ENCODE measurements at regions of chr9 and their contacts with region 1.

Region 1: GRCh38 chr9:68584189-68585033 is 43.7 kb upstream of the TMEM252 start:
- DNase-seq: peak; percentile 82
- H3K4me3 ChIP-seq: no peak overlapping the region
- H3K27ac ChIP-seq: no peak overlapping the region
- H3K4me1 ChIP-seq: no peaks in the 10 kb centered on the region
- H3K27me3 ChIP-seq: no peaks in the 10 kb centered on the region
- CTCF ChIP-seq: peak; percentile 97 to 100
- POLR2A ChIP-seq: no peak

Region 2: DNA sequence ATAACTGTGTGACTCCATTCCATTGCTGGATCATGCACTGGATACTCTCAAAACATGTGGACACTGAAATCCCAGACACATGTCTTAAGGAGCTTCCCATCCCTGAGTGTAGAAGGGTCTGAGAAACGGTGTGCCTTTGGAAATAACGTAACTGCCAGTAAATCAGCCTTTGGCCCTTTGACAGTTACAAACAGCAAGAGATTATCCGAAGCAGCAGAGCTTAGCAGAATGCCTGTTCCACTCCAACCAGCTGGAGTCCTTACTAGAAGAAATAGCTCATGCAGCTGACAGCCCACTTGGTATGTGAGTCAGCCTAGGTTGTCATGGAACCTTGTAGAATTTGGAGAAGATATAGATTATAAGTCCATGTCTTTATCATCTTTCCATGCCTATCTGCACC is 50.7 kb before region 1 on chr9:
- CTCF ChIA-PET with region 1: no interaction called
- POLR2A ChIA-PET with region 1: no interaction called
- dilution Hi-C with region 1: no loop called
- intact Hi-C with region 1: no loop called
- DNase-seq: no peak
- H3K4me3 ChIP-seq: no peak overlapping the region
- H3K27ac ChIP-seq: no peak overlapping the region
- H3K4me1 ChIP-seq: no peaks in the 10 kb centered on the region
- H3K27me3 ChIP-seq: no peaks in the 10 kb centered on the region
- CTCF ChIP-seq: no peak
- POLR2A ChIP-seq: no peak

Region 3: GRCh38 chr9:68545033-68545705 is 39.2 kb before region 1 on chr9:
- CTCF ChIA-PET with region 1: no interaction called
- POLR2A ChIA-PET with region 1: no interaction called
- dilution Hi-C with region 1: no loop called
- intact Hi-C with region 1: no loop called
- DNase-seq: no peak
- H3K4me3 ChIP-seq: no peak overlapping the region
- H3K27ac ChIP-seq: no peak overlapping the region
- H3K4me1 ChIP-seq: no peaks in the 10 kb centered on the region
- H3K27me3 ChIP-seq: no peaks in the 10 kb centered on the region
- CTCF ChIP-seq: no peak
- POLR2A ChIP-seq: no peak

Region 4: DNA sequence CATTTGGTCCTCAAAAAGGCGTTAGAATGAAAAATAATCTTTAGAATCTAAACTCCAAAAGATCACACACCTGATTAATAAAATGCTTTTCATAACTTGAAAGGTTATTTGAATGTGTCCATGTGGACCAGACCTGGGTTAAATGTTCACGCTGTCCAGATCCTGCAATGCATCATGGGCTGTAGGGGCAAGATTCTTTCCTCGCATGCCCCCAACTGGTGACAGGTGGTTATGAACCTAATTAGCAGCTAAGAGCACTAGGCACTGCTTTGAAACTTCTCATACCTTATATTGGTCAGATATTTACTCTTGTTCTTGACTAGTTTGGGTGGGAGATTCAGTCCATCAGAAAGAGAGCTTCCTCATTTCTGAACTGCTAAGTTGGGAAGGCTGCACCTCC is 101.4 kb after region 1 on chr9:
- CTCF ChIA-PET with region 1: no interaction called
- POLR2A ChIA-PET with region 1: no interaction called
- dilution Hi-C with region 1: no loop called
- intact Hi-C with region 1: loop called (anchors 1 kb)
- DNase-seq: peak; percentile 39
- H3K4me3 ChIP-seq: no peak overlapping the region
- H3K27ac ChIP-seq: no peak overlapping the region
- H3K4me1 ChIP-seq: no peaks in the 10 kb centered on the region
- H3K27me3 ChIP-seq: peaks cover 2% of the 10 kb centered on the region in 2 experiments
- CTCF ChIP-seq: peak; percentile 36 to 48
- POLR2A ChIP-seq: no peak

Region 5: DNA sequence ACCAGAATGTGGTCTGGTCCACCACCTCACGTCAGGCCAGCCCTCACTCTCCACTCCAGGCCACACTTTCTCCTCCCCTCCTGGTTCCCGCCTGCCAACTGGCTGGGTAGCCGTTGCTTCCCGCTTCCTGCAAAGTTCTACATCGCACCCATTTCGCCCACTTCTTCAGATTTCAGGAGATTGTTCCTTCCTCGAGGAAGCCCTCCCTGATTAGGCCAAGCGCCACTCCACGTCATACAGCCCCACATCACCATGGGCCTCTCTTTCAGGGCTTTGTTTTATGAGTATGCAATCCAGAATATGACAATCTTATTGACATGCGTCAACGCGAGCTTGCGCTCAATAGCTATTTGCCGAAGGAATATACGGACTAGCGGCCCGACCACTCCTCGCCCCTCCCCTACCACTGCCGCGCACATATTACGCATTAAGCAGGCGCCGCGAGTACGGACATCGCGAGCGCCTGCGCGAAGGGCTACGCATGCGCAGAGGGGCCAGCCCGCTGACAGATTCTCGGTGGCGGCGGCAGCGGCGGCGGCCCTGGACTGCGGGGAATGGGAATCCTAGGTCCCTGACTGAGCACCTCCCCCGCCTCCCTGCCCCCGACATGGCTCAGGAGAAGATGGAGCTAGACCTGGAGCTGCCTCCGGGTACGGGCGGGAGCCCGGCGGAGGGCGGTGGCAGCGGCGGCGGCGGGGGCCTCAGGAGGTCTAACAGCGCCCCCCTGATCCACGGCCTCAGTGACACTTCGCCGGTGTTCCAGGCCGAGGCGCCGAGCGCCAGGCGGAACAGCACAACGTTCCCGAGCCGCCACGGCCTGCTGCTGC is 195.4 kb after region 1 on chr9:
- CTCF ChIA-PET with region 1: no interaction called
- POLR2A ChIA-PET with region 1: no interaction called
- dilution Hi-C with region 1: no loop called
- intact Hi-C with region 1: loop called (anchors 5 kb)
- DNase-seq: peak; percentile 96
- H3K4me3 ChIP-seq: peak overlapping the region; percentile 52 to 71 (median 62)
- H3K27ac ChIP-seq: peak overlapping the region; percentile 87
- H3K4me1 ChIP-seq: peaks cover 26% of the 10 kb centered on the region
- H3K27me3 ChIP-seq: peaks cover 5% of the 10 kb centered on the region in 2 experiments
- CTCF ChIP-seq: peak; percentile 27 to 49
- POLR2A ChIP-seq: peak; percentile 54

Region 6: GRCh38 chr9:68844631-68845612 is 260.5 kb after region 1 on chr9:
- CTCF ChIA-PET with region 1: interaction called, 9 read pairs
- POLR2A ChIA-PET with region 1: no interaction called
- dilution Hi-C with region 1: no loop called
- intact Hi-C with region 1: loop called (anchors 1 kb)
- DNase-seq: peak; percentile 15
- H3K4me3 ChIP-seq: no peak overlapping the region
- H3K27ac ChIP-seq: no peak overlapping the region
- H3K4me1 ChIP-seq: no peaks in the 10 kb centered on the region
- H3K27me3 ChIP-seq: peaks cover 0 to 2% of the 10 kb centered on the region in 2 experiments
- CTCF ChIP-seq: peak; percentile 38 to 59
- POLR2A ChIP-seq: no peak

Region 7: DNA sequence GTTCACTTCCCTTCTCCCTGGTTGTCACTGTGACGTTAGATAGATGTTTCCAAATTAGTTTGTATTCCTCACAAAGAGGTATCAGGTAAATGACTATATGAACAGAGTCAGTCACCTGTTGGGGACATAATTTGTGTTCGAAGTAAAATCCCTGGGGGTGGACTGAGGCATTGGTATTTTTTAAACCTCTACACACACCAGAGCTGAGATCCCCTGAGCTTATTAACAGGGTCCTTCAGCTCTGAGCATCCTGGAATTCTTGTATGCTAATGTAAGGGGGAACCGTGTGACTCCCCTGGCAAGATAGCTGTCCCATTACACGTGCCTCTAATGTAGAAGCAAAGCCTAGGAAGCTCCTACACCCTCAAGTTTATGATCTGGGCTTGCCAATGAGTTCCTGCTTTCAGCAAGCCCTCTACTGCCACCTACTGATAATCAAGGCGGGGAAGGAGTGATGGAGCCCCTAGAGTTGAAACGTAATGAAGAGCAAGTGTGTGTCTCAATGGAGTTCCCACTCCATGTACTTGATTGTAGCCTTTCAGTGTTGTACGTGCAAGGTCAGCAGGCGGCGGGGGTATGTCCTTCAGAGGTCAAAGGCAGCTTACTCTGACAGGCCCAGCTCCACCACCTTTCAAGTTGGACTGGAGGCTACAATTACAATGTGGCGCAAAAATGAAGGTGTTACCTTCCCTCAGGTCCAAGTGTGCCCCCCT is 415.1 kb after region 1 on chr9:
- CTCF ChIA-PET with region 1: interaction called, 47 read pairs
- POLR2A ChIA-PET with region 1: no interaction called
- dilution Hi-C with region 1: no loop called
- intact Hi-C with region 1: loop called (anchors 1 kb)
- DNase-seq: peak; percentile 67
- H3K4me3 ChIP-seq: no peak overlapping the region
- H3K27ac ChIP-seq: no peak overlapping the region
- H3K4me1 ChIP-seq: no peaks in the 10 kb centered on the region
- H3K27me3 ChIP-seq: peaks cover 2 to 8% of the 10 kb centered on the region in 2 experiments
- CTCF ChIP-seq: peak; percentile 71 to 77
- POLR2A ChIP-seq: no peak

Region 8: GRCh38 chr9:69027355-69028096 is 443.1 kb after region 1 on chr9:
- CTCF ChIA-PET with region 1: no interaction called
- POLR2A ChIA-PET with region 1: no interaction called
- dilution Hi-C with region 1: no loop called
- intact Hi-C with region 1: loop called (anchors 1 kb)
- DNase-seq: peak; percentile 53
- H3K4me3 ChIP-seq: no peak overlapping the region
- H3K27ac ChIP-seq: no peak overlapping the region
- H3K4me1 ChIP-seq: peaks cover 9% of the 10 kb centered on the region
- H3K27me3 ChIP-seq: peaks cover 2 to 7% of the 10 kb centered on the region in 2 experiments
- CTCF ChIP-seq: peak; percentile 69 to 74
- POLR2A ChIP-seq: no peak

Region 9: GRCh38 chr9:69932901-69933300 is 1348.5 kb after region 1 on chr9:
- CTCF ChIA-PET with region 1: no interaction called
- POLR2A ChIA-PET with region 1: no interaction called
- dilution Hi-C with region 1: no loop called
- intact Hi-C with region 1: loop called (anchors 5 kb)
- DNase-seq: peak; percentile 44
- H3K4me3 ChIP-seq: no peak overlapping the region
- H3K27ac ChIP-seq: no peak overlapping the region
- H3K4me1 ChIP-seq: no peaks in the 10 kb centered on the region
- H3K27me3 ChIP-seq: peaks cover 4% of the 10 kb centered on the region in 2 experiments
- CTCF ChIP-seq: peak; percentile 28 to 48
- POLR2A ChIP-seq: no peak